ENCODE measurements at regions of chr17 and their contacts with region 1.

Region 1: GRCh38 chr17:6913608-6914443 is 82.0 kb upstream of the ALOX12 start:
- DNase-seq: peak; percentile 87
- ATAC-seq: peak; percentile 83
- H3K4me3 Mint-ChIP-seq: peak overlapping the region; percentile 71
- H3K27ac Mint-ChIP-seq: no peak overlapping the region
- H3K4me1 Mint-ChIP-seq: peaks cover 14% of the 10 kb centered on the region
- H3K27me3 Mint-ChIP-seq: peaks cover 26% of the 10 kb centered on the region

Region 2: DNA sequence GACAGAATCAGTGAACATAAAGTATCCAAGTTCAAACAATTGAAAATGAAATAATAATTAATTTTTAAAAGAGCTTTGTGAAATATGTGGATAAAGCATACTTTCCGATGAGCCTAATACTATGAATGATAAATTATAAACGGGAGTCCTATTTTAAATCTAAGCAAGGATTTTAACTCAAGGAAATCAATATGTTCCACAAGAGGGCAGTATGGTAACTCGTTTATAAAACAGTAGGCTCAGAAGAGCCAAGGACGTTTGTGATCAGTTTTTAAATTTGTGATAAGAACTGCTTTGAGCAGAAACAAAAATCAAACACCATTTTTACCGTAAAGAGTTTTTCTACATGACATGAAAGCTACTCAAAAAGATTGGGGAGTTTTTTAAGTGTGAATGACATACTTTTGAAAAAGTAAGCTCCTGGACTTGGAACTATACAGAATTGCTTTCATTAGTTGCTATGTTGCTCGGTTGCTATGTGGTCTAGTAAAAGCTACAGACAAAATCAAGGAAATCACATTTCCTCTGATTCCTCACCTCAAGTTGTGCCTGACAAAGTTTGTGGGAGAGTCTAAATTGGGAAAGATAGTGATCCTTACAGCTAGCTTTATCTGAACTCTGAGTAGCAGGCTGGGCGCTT is 70.5 kb before region 1 on chr17:
- CTCF ChIA-PET with region 1: interaction called, 21 read pairs
- POLR2A ChIA-PET with region 1: no interaction called
- DNase-seq: no peak
- ATAC-seq: no peak
- H3K4me3 Mint-ChIP-seq: no peak overlapping the region
- H3K27ac Mint-ChIP-seq: no peak overlapping the region
- H3K4me1 Mint-ChIP-seq: peaks cover 8% of the 10 kb centered on the region
- H3K27me3 Mint-ChIP-seq: peaks cover 59% of the 10 kb centered on the region

Region 3: GRCh38 chr17:6927290-6928126 is 13.7 kb after region 1 on chr17:
- CTCF ChIA-PET with region 1: interaction called, 16 read pairs
- POLR2A ChIA-PET with region 1: interaction called, 3 read pairs
- DNase-seq: no peak
- ATAC-seq: no peak
- H3K4me3 Mint-ChIP-seq: no peak overlapping the region
- H3K27ac Mint-ChIP-seq: no peak overlapping the region
- H3K4me1 Mint-ChIP-seq: peaks cover 25% of the 10 kb centered on the region
- H3K27me3 Mint-ChIP-seq: peaks cover 29% of the 10 kb centered on the region

Region 4: GRCh38 chr17:6994666-6995246 is 80.9 kb after region 1 on chr17:
- CTCF ChIA-PET with region 1: interaction called, 206 read pairs
- POLR2A ChIA-PET with region 1: interaction called, 3 read pairs
- DNase-seq: no peak
- ATAC-seq: no peak
- H3K4me3 Mint-ChIP-seq: no peak overlapping the region
- H3K27ac Mint-ChIP-seq: no peak overlapping the region
- H3K4me1 Mint-ChIP-seq: no peaks in the 10 kb centered on the region
- H3K27me3 Mint-ChIP-seq: no peaks in the 10 kb centered on the region

Region 5: DNA sequence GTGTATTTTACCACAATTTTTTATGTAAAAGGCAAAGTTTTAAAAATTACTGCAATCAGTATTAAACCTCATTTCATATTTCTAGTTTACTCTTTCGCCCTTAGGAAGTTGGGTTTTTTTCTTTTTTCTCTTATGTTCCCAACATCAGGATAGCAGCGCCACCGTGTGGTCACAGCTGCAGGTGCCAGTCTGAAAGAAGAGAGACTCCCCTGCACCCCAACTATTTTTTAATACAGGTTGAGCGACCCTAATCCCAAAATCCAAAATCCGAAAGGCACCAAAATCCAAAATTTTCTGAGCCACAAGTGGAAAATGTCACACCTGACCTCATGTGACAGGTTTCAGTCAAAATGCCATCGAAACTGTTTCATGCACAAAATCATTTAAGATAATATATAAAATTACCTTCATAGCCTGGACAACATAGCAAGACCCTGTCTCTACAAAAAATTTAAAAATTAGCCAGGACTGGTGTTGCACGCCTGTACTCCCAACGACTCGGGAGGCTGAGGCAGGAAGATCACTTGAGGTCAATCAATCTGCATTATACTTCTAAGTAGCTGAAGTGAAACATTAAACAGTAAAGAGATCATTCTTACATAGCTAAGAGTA is 222.5 kb after region 1 on chr17:
- CTCF ChIA-PET with region 1: interaction called, 14 read pairs
- POLR2A ChIA-PET with region 1: no interaction called
- DNase-seq: peak; percentile 84
- ATAC-seq: no peak
- H3K4me3 Mint-ChIP-seq: no peak overlapping the region
- H3K27ac Mint-ChIP-seq: no peak overlapping the region
- H3K4me1 Mint-ChIP-seq: peaks cover 10% of the 10 kb centered on the region
- H3K27me3 Mint-ChIP-seq: peaks cover 4% of the 10 kb centered on the region

Measured in activated CD8-positive, alpha-beta T cell treated with anti-CD3 and anti-CD28 coated beads, Interleukin-2, amount 10 ng/mL, durations not matched to agents 7 days and 5 days (primary cell).